Mammary epithelial cell (primary cell): ENCODE measurements at regions of chr7 and their contacts with region 1.

Region 1: GRCh38 chr7:126378642-126379041 is 874.1 kb downstream of the GRM8 start:
- DNase-seq: no peak
- H3K4me3 ChIP-seq: no peak overlapping the region
- H3K27ac ChIP-seq: no peak overlapping the region
- H3K4me1 ChIP-seq: no peaks in the 10 kb centered on the region
- H3K27me3 ChIP-seq: no peaks in the 10 kb centered on the region
- CTCF ChIP-seq: no peak

Region 2: DNA sequence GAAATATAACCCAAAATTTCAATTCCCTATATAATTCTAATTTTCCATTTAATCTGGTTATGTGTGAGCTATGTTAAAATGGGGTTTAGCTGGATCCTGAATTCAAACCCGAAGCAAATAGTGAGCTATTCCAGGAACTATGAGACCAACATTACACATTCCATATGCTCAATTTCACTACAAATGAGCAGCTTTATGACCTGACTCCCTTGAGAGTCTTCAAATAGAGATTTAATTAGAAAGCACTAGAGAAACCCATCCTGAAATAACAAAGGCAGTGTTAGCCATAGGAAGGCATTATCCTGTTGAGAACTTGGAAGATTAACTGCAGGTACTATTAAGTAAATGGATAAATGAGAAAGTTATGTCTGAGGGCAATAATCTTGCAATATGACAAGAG is 15.9 kb before region 1 on chr7:
- CTCF ChIA-PET with region 1: no interaction called
- dilution Hi-C with region 1: no loop called
- in situ Hi-C with region 1: no loop called
- intact Hi-C with region 1: loop called (anchors 1 kb)
- DNase-seq: no peak
- H3K4me3 ChIP-seq: no peak overlapping the region
- H3K27ac ChIP-seq: no peak overlapping the region
- H3K4me1 ChIP-seq: no peaks in the 10 kb centered on the region
- H3K27me3 ChIP-seq: no peaks in the 10 kb centered on the region
- CTCF ChIP-seq: no peak